Activated naive CD4-positive, alpha-beta T cell treated with anti-CD3 and anti-CD28 coated beads for 36 hours (primary cell): ENCODE measurements at regions of chr12 and their contacts with region 1.

Region 1: DNA sequence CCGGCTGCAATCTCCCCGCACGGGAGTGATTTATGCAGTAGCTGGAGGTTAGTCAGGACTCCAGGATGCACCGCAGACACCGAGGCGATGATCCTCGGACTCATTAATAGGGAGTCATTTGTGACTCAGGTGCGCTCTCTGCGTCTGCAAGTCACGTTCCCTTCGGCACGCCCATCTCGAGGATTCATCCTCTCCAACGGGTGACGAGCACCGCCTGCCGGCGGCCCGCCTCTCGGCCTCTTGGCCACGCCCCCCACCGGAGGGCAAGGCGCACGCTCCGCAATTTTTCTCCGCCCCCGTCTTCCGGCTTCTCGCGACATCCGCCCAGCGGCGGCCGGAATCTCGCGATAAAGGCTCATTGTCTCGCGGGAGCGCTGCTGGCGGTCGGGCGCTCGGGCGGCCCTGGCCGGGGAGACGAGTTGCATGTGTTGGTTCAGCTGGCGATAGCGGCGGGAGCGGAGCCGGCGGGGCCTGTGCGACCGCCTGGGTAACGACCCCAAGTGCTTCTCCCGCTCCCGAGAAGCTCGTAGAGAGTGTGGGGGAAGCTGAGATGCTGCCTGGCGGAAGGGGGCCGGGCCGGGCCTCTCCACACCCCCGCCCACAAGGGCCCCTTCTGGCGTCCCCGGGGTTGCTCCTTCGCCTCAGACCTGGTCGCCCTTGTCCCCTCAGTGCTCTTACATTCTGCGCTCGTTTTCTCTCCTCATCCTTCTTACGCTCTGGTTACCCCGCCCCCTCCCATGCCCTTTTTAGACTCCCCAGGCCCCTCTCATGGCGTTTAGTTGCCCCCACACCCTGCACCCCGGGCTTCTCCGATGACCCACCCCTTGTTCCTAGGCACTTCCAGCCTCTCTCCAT is at the start of gene DENR:
- DNase-seq: peak; percentile 100
- H3K4me3 Mint-ChIP-seq: peak within 1 kb of the TSS; percentile 98
- H3K27ac Mint-ChIP-seq: peak within 1 kb of the TSS; percentile 90
- H3K4me1 Mint-ChIP-seq: peaks cover 51% of the 10 kb centered on the region
- H3K27me3 Mint-ChIP-seq: no peaks in the 10 kb centered on the region
- total RNA-seq, gene DENR: 47.9 to 52.4 TPM

Region 2: GRCh38 chr12:122336015-122336946 is 416.4 kb before region 1 on chr12:
- CTCF ChIA-PET with region 1: no interaction called
- intact Hi-C with region 1: loop called (anchors 2 kb)
- DNase-seq: peak; percentile 63
- H3K4me3 Mint-ChIP-seq: no peak overlapping the region
- H3K27ac Mint-ChIP-seq: peak overlapping the region; percentile 32
- H3K4me1 Mint-ChIP-seq: peaks cover 11% of the 10 kb centered on the region
- H3K27me3 Mint-ChIP-seq: no peaks in the 10 kb centered on the region

Region 3: DNA sequence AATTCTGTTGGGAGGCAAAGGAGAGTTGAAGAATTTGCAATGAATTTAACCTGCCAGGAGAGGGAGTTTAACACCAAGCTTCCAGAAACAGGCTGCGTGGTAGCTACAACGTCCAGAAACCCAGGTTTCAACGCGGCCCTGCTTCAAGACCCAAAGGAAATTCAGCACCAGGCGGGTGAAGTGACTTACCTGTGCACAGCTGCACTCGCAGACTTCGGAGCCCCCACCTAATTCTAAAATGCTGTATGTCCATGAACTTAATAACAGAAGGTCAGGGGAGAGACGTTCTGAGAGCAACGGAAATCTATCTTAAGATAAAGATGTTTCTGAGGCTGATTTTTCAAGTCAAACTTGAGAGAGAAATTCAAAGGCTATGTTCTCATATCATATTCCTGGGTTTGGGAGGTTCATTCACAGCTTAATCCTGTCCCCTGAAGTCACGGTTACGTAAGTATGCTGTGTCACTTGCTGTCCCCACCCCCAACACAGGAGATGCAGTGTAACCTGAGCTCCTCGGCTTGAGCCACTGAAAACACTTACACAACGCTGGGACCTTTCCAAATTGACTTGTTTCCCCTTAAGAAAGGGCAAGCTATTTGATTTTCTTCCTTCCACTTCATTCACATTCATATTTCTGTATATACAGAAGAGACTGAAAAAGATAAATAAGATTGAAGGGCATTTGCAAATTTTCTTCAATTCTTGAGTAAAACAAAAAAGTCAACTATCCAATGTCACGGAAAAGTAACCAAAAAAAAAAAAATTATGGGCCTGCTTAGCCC is 352.9 kb before region 1 on chr12:
- CTCF ChIA-PET with region 1: no interaction called
- intact Hi-C with region 1: loop called (anchors 1 kb)
- DNase-seq: peak; percentile 70
- H3K4me3 Mint-ChIP-seq: peak overlapping the region; percentile 51
- H3K27ac Mint-ChIP-seq: peak overlapping the region; percentile 81
- H3K4me1 Mint-ChIP-seq: peaks cover 44% of the 10 kb centered on the region
- H3K27me3 Mint-ChIP-seq: no peaks in the 10 kb centered on the region

Region 4: GRCh38 chr12:122533856-122534255 is 218.8 kb before region 1 on chr12:
- CTCF ChIA-PET with region 1: no interaction called
- intact Hi-C with region 1: no loop called
- DNase-seq: no peak
- H3K4me3 Mint-ChIP-seq: no peak overlapping the region
- H3K27ac Mint-ChIP-seq: no peak overlapping the region
- H3K4me1 Mint-ChIP-seq: peaks cover 8% of the 10 kb centered on the region
- H3K27me3 Mint-ChIP-seq: no peaks in the 10 kb centered on the region

Region 5: DNA sequence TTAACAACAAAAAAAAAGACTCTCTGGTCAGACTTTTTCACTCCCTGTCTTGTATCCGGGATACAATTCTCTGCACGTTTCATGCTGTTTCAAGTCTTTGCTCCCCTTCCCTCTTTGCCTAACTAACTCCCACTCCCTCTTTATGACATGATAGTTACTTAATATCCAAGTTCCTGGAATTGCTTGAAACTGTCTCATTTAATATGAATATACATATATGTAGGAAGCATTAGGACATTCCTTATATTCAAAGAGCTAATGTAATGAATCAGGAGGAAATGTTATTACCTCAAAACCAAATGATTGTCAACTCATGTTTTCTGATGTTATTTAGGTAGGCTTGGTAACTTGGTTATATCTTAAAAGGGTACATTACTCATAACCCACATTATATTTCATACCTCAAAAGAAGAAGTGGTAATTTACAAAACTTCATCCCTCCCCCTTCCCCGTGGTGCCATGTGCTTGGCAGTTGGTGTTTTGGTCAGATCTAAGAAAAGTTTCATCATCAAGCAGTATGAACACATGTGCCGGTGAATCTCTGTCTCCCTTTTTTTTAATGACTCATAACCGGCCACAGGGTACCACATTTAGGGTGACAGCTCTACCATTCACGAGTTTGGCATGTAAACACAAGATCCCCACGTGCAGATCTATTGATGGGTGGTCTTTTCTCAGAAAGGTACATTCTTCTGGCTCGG is 106.0 kb before region 1 on chr12:
- CTCF ChIA-PET with region 1: interaction called, 3 read pairs
- intact Hi-C with region 1: loop called (anchors 1 kb)
- DNase-seq: peak; percentile 81
- H3K4me3 Mint-ChIP-seq: peak overlapping the region; percentile 44
- H3K27ac Mint-ChIP-seq: peak overlapping the region; percentile 63
- H3K4me1 Mint-ChIP-seq: peaks cover 14% of the 10 kb centered on the region
- H3K27me3 Mint-ChIP-seq: no peaks in the 10 kb centered on the region

Region 6: GRCh38 chr12:122721057-122721545 is 31.6 kb before region 1 on chr12:
- CTCF ChIA-PET with region 1: interaction called, 3 read pairs
- intact Hi-C with region 1: loop called (anchors 1 kb)
- DNase-seq: peak; percentile 26
- H3K4me3 Mint-ChIP-seq: peak overlapping the region; percentile 30
- H3K27ac Mint-ChIP-seq: peak overlapping the region; percentile 88
- H3K4me1 Mint-ChIP-seq: peaks cover 49% of the 10 kb centered on the region
- H3K27me3 Mint-ChIP-seq: no peaks in the 10 kb centered on the region

Region 7: GRCh38 chr12:122732170-122732569 is 20.5 kb before region 1 on chr12:
- CTCF ChIA-PET with region 1: interaction called, 7 read pairs
- intact Hi-C with region 1: loop called (anchors 1 kb)
- DNase-seq: peak; percentile 69
- H3K4me3 Mint-ChIP-seq: no peak overlapping the region
- H3K27ac Mint-ChIP-seq: peak overlapping the region; percentile 89
- H3K4me1 Mint-ChIP-seq: peaks cover 75% of the 10 kb centered on the region
- H3K27me3 Mint-ChIP-seq: no peaks in the 10 kb centered on the region